GM12878 (cell line): ENCODE measurements at regions of chr19 and their contacts with region 1.

Region 1: GRCh38 chr19:4369888-4370260 is 26.5 kb downstream of the MPND start:
- DNase-seq: no peak
- ATAC-seq: peak; percentile 83
- H3K4me3 ChIP-seq: peak overlapping the region; percentile 71
- H3K27ac ChIP-seq: peak overlapping the region; percentile 98
- H3K4me1 ChIP-seq: peaks cover 61% of the 10 kb centered on the region
- H3K27me3 ChIP-seq: no peaks in the 10 kb centered on the region
- CTCF ChIP-seq: peak; percentile 63 to 80 (median 74)
- EP300 ChIP-seq: 0 out of 4 replicates have a peak, but pooled peaks of 1 of the 2 experiments have one; percentile 22
- POLR2A ChIP-seq: no peak; the same call in none of the 2 replicates
- RAD21 ChIP-seq: peak; percentile 49; the same call in 1 of the 2 replicates

Region 2: DNA sequence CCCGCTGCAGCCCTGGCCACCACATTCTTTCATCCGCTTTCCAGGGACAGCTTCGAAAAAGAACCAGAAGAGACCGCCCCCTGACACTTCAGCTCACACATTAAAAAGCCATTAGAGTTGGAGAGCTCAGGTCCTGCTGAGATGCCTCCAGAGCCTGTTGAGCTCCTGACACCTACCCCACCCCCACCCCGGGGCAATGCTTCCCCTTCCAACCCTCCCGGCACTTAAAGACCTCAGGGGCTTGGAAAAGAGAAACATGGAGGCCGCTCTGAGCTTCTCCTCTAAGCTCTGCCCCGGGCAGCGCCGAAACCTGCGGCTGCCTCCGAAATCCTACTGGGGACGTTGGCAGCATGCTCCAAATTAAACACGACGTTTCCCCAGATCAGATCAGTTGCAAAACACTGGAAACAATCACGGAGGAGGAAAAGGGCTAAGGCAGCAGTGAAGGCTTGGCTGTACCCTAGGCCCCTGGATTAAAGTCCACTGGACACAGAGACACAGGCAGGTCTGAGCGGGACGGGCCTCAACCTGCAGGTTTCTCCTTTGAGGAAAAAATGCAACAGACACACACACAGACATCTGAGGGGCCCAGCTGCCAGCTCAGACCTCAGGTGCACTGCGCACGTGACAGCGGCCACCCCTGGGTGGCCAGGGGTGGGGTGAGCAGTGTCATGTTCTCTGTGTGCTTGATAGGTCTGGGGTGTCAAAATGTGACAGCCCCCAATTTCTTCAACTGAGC is 20.9 kb after region 1 on chr19:
- CTCF ChIA-PET with region 1: interaction called, 18 read pairs
- POLR2A ChIA-PET with region 1: interaction called, 110 read pairs
- RAD21 ChIA-PET with region 1: interaction called, 8 read pairs
- SMC1A ChIA-PET with region 1: interaction called, 27 read pairs
- in situ Hi-C with region 1: no loop called
- intact Hi-C with region 1: loop called (anchors 1 kb)
- DNase-seq: no peak
- ATAC-seq: no peak
- H3K4me3 ChIP-seq: no peak overlapping the region
- H3K27ac ChIP-seq: no peak overlapping the region
- H3K4me1 ChIP-seq: peaks cover 8% of the 10 kb centered on the region
- H3K27me3 ChIP-seq: no peaks in the 10 kb centered on the region
- CTCF ChIP-seq: no peak
- EP300 ChIP-seq: no peak
- POLR2A ChIP-seq: no peak
- RAD21 ChIP-seq: no peak

Region 3: GRCh38 chr19:4505897-4506744 is 136.2 kb after region 1 on chr19:
- CTCF ChIA-PET with region 1: no interaction called
- POLR2A ChIA-PET with region 1: no interaction called
- RAD21 ChIA-PET with region 1: no interaction called
- SMC1A ChIA-PET with region 1: no interaction called
- in situ Hi-C with region 1: no loop called
- intact Hi-C with region 1: no loop called
- DNase-seq: no peak
- ATAC-seq: no peak
- H3K4me3 ChIP-seq: no peak overlapping the region
- H3K27ac ChIP-seq: no peak overlapping the region
- H3K4me1 ChIP-seq: no peaks in the 10 kb centered on the region
- H3K27me3 ChIP-seq: no peaks in the 10 kb centered on the region
- CTCF ChIP-seq: no peak
- EP300 ChIP-seq: no peak
- POLR2A ChIP-seq: no peak
- RAD21 ChIP-seq: no peak